SK-N-SH (cell line): ENCODE measurements at regions of chr9 and their contacts with region 1.

Region 1: DNA sequence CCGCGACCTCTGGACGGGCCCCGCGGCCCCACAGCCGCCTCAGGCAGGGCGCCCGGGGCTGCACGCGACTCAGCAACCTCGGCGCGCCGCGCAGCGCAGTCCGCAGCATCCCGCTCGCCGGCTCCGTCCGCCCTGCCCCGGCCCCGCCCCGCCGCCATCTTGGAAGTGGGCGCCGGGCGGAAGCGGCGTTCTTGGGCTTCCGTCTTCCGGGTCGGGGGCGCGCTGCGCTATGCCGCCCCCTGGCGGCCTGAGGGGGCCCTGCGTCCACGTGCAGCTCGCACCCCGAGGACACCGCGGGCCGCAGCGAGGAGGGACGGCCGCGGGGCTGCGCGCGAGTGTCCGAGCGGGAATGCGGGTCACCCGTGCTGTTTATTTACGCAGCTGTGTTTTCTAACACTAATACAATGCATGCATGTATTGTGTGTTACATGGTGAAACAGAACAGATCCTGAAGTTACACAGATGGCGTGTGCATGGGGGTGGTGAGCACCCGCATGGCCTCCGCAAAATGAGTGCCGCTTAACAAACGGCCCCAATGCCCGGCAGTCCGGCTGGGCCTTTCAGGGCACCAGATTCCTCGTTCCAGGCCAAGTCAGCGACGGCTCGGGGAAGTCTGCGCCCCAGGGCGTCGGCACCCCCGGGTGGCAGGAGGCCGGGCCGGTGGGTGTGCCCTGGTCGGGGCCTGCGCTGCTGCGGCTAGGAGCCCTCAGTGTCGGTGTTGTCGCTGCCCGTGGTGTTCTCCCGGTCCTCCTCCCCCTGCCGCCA is at the start of gene DNLZ:
- DNase-seq: peak; percentile 94
- H3K4me3 ChIP-seq: peak within 1 kb of the TSS; percentile 79 to 96
- H3K27ac ChIP-seq: peak within 1 kb of the TSS; percentile 75 to 96; a peak in 3 of 4 replicates
- H3K4me1 ChIP-seq: peaks cover 0 to 61% of the 10 kb centered on the region in 2 experiments; a peak in 1 of 4 replicates
- H3K27me3 ChIP-seq: no peaks in the 10 kb centered on the region
- CTCF ChIP-seq: peak; percentile 85
- EP300 ChIP-seq: no peak
- RAD21 ChIP-seq: peak; percentile 40
- polyA plus RNA-seq, gene DNLZ: 24.5 and 40.6 TPM in 2 replicates

Region 2: GRCh38 chr9:136312436-136312835 is 51.4 kb before region 1 on chr9:
- CTCF ChIA-PET with region 1: interaction called, 50 read pairs
- POLR2A ChIA-PET with region 1: interaction called, 4 read pairs
- DNase-seq: peak; percentile 92
- H3K4me3 ChIP-seq: no peak overlapping the region
- H3K27ac ChIP-seq: no peak overlapping the region
- H3K4me1 ChIP-seq: no peaks in the 10 kb centered on the region; a peak in 1 of 4 replicates
- H3K27me3 ChIP-seq: no peaks in the 10 kb centered on the region
- CTCF ChIP-seq: peak; percentile 68
- EP300 ChIP-seq: no peak
- RAD21 ChIP-seq: peak; percentile 85

Region 3: DNA sequence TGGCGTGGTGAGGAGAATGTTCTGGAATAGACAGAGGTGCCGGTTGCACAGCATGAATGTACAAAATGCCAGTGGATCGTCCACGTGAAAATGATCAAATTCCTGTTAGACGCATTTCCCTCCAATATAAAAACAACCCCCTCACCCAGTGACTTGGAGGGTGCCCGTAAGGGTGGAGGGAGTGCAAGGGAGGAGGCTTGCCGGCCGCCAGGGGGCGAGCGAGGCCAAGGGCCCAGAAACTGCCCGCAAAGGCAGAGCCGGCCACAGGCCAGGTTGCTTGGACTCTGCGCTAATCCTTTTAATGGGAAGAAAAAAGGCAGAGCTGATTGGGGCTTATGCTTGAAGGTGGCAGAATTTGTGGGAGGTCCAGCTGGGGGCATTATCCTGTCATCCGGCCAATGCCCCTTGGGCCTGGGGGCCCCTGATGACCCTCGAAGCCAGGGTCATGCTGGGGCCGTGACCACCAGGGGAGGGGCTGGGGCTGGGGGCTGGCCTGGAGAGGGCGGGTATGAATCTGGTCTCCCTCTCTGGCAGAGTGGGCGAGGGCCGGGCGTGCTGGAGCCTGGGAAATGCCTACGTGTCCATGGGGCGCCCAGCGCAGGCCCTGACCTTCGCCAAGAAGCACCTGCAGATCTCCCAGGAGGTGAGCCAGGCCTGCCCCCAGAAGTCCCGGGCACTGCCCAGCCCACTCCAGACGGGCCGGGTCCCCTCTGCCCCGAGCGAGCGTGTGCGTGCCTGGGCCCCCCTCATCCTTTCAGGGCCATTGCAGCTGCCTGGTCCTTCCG is 24.4 kb before region 1 on chr9:
- CTCF ChIA-PET with region 1: interaction called, 28 read pairs
- POLR2A ChIA-PET with region 1: interaction called, 3 read pairs
- DNase-seq: peak; percentile 83
- H3K4me3 ChIP-seq: peak overlapping the region in 1 of 2 experiments; percentile 29; a peak in 1 of 4 replicates
- H3K27ac ChIP-seq: no peak overlapping the region
- H3K4me1 ChIP-seq: no peaks in the 10 kb centered on the region; a peak in 1 of 4 replicates
- H3K27me3 ChIP-seq: no peaks in the 10 kb centered on the region
- CTCF ChIP-seq: peak; percentile 73
- EP300 ChIP-seq: no peak
- RAD21 ChIP-seq: peak; percentile 62

Region 4: GRCh38 chr9:136385015-136385414 is 21.2 kb after region 1 on chr9:
- CTCF ChIA-PET with region 1: interaction called, 15 read pairs
- POLR2A ChIA-PET with region 1: interaction called, 11 read pairs
- DNase-seq: no peak
- H3K4me3 ChIP-seq: no peak overlapping the region
- H3K27ac ChIP-seq: no peak overlapping the region
- H3K4me1 ChIP-seq: no peaks in the 10 kb centered on the region
- H3K27me3 ChIP-seq: no peaks in the 10 kb centered on the region
- CTCF ChIP-seq: no peak
- EP300 ChIP-seq: no peak
- RAD21 ChIP-seq: no peak

Region 5: DNA sequence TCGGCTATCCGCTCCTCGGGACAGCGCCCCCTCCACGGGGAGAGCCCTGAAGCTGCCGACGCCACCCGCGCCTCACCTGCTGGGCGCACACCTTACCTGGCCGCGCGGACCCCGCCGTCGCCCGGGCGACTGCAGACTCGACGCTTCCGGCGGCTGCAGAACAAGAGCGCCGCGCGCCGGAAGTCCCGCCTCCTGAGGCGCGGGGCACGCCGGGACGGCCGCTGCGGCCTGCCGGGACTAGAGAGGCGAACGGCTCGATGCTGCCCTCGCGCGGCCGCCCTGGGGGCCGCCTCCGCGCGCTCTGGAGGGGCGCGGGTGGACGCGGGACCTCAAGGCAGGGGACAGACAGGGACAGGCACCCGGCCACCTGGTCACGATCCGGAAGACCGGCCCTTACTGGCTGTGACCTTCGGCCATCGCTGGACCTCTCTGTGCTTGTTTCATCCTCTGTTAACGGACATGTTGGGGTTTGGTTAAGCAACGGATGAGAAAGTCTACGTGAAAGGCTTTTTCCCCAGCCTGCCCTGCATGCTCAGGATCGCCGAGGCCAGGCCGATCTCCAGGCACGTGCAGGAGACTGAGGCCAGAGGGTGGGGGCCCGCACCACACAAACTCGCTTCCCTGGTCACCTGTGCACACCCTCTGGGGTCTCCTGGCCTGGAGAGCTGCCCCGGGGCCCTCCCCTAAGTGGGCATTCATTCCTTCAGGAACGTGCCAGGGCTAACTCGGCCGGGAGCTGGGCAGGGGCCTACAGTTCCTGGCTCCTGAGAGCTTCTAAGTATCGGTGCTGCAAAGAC is 36.4 kb after region 1 on chr9 and contains the start of gene SNAPC4:
- CTCF ChIA-PET with region 1: interaction called, 41 read pairs
- POLR2A ChIA-PET with region 1: no interaction called
- DNase-seq: peak; percentile 99
- H3K4me3 ChIP-seq: peak within 1 kb of the TSS; percentile 85 to 99
- H3K27ac ChIP-seq: peak within 1 kb of the TSS; percentile 30 to 73; a peak in 2 of 4 replicates
- H3K4me1 ChIP-seq: peaks cover 3 to 19% of the 10 kb centered on the region in 2 experiments; a peak in 2 of 4 replicates
- H3K27me3 ChIP-seq: no peaks in the 10 kb centered on the region
- CTCF ChIP-seq: peak; percentile 82
- EP300 ChIP-seq: peak in 1 of 2 experiments; percentile 19; a peak in 1 of 4 replicates
- RAD21 ChIP-seq: peak; percentile 76
- polyA plus RNA-seq, gene SNAPC4: 7.7 and 9.2 TPM in 2 replicates